CD4-positive, alpha-beta T cell (primary cell): ENCODE measurements at regions of chr15 and their contacts with region 1.

Region 1: DNA sequence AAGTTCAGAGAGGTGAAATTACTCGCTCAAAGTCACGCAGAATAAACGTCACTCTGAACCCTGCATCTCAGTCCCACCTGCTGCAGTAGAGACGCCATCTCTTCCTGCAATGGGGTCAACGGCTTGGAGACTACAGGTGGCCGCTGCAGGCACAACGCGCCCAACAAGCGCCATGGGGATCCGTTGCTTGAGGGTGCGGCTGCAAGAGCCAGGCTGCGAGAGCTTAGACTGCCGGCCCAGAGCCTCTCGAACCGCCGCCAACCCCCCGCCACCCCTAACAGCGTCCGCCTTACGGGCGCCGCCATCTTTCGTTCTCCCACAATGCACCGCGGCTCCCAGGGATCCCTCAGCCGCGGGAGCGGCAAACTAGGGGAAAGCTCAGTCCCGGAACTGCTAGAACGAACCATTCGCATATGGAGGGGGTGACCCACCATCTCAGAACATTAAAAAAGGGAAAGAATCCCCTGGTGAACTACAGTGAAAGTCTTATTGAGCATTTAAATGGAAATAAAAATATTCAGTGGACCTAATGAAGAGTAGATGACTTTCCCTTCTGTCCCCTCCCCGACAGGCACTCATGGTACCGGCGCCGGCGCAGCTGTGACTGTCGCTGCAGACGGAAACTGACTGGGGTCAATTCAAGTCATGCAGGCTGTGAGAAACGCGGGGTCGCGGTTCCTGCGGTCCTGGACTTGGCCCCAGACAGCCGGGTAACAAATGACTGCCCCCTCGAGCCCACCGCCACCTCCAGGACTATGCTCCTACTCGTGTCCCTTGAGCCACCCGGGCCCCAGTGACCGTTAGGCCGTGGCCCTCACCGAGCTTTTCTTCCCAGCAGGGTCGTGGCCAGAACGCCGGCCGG is at the starts of genes MRPL46 and MRPS11:
- DNase-seq: peak; percentile 82 to 94 (median 87)
- ATAC-seq: peak; percentile 91
- H3K4me3 ChIP-seq: peak within 1 kb of the TSS; percentile 74
- H3K4me3 Mint-ChIP-seq: peak within 1 kb of the TSS; percentile 98
- H3K27ac ChIP-seq: peak within 1 kb of the TSS; percentile 80 to 96
- H3K27ac Mint-ChIP-seq: peak within 1 kb of the TSS; percentile 99
- H3K4me1 ChIP-seq: peaks cover 19% of the 10 kb centered on the region
- H3K4me1 Mint-ChIP-seq: peaks cover 43% of the 10 kb centered on the region
- H3K27me3 ChIP-seq: no peaks in the 10 kb centered on the region
- H3K27me3 Mint-ChIP-seq: no peaks in the 10 kb centered on the region
- CTCF ChIP-seq: no peak
- total RNA-seq, gene MRPL46: 8.6 to 10.2 TPM
- total RNA-seq, gene MRPS11: 8.0 to 8.4 TPM

Region 2: DNA sequence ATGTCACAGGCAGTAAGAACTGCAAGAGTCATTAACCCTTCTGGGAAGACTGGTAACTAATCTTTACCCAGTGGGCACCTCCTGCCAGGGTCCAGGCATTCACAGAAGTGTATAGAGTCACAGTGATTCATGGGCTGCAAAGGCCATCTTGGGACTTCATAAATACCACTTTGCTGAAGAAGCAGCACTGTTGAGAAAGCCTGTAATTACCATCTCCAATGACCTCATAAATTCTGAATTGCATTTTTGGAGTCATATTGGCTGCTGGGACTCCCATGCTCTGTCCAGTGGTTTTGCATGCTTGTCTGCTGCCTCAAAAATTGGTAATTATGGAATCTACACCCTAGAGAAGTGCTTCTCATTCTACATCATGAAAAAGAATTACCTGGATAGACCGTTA is 1048.0 kb before region 1 on chr15:
- CTCF ChIA-PET with region 1: no interaction called
- POLR2A ChIA-PET with region 1: no interaction called
- intact Hi-C with region 1: no loop called
- DNase-seq: no peak
- ATAC-seq: no peak
- H3K4me3 ChIP-seq: no peak overlapping the region
- H3K4me3 Mint-ChIP-seq: no peak overlapping the region
- H3K27ac ChIP-seq: no peak overlapping the region
- H3K27ac Mint-ChIP-seq: no peak overlapping the region
- H3K4me1 ChIP-seq: no peaks in the 10 kb centered on the region
- H3K4me1 Mint-ChIP-seq: no peaks in the 10 kb centered on the region
- H3K27me3 ChIP-seq: no peaks in the 10 kb centered on the region
- H3K27me3 Mint-ChIP-seq: no peaks in the 10 kb centered on the region
- CTCF ChIP-seq: no peak

Region 3: GRCh38 chr15:88529021-88529630 is 61.8 kb after region 1 on chr15:
- CTCF ChIA-PET with region 1: no interaction called
- POLR2A ChIA-PET with region 1: no interaction called
- intact Hi-C with region 1: no loop called
- DNase-seq: no peak
- ATAC-seq: no peak
- H3K4me3 ChIP-seq: no peak overlapping the region
- H3K4me3 Mint-ChIP-seq: no peak overlapping the region
- H3K27ac ChIP-seq: no peak overlapping the region
- H3K27ac Mint-ChIP-seq: no peak overlapping the region
- H3K4me1 ChIP-seq: no peaks in the 10 kb centered on the region
- H3K4me1 Mint-ChIP-seq: peaks cover 6% of the 10 kb centered on the region
- H3K27me3 ChIP-seq: no peaks in the 10 kb centered on the region
- H3K27me3 Mint-ChIP-seq: no peaks in the 10 kb centered on the region
- CTCF ChIP-seq: no peak

Region 4: DNA sequence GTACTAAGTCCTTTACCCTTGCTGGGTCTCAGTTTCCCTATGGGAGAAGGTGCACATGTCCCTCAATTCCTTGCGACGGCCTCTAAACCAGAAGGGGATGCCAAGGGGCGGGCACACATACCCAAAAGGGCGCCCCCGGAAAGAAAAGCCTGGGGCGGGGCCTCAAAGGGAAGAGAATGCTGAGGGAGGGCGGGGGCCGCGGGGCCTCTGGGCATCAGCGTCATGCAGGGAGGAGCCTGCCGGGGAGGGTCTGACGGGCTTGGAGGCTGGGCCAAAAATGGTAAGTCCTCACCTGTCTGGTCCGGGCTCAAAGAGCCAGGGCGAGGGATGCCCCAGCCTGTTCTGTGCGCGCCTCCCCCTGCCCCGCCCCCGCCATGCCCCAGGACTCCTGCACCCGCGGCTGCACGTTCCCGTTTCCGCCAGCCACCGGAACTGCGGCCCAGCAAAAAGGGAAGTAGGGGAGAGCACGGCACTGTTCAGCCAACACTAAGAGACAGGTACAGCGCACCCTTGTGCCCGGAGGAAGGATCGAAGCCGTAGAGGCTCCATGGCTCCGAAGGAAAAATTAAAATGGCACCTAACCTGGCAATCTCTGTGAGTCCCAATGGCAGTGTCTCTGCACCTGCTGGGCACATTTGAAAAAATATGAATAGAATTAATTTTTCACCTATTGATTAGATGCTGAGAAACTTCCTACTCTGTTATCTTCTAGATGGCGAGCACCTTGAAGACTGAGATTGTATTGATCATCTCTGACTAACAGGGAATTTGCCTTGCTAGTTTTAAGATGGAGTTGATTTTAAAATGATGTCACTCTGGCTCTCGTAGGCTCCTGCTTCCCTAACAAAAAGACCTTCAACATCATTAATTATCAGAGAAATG is 79.2 kb after region 1 on chr15 and contains the start of gene DET1:
- CTCF ChIA-PET with region 1: no interaction called
- POLR2A ChIA-PET with region 1: no interaction called
- intact Hi-C with region 1: loop called in 1 of 2 experiments (anchors 1 kb)
- DNase-seq: peak; percentile 90 to 98 (median 94)
- ATAC-seq: peak; percentile 91
- H3K4me3 ChIP-seq: peak within 1 kb of the TSS; percentile 66
- H3K4me3 Mint-ChIP-seq: peak within 1 kb of the TSS; percentile 91
- H3K27ac ChIP-seq: peak within 1 kb of the TSS; percentile 64 to 74
- H3K27ac Mint-ChIP-seq: peak within 1 kb of the TSS; percentile 95
- H3K4me1 ChIP-seq: peaks cover 10% of the 10 kb centered on the region
- H3K4me1 Mint-ChIP-seq: peaks cover 19% of the 10 kb centered on the region
- H3K27me3 ChIP-seq: no peaks in the 10 kb centered on the region
- H3K27me3 Mint-ChIP-seq: no peaks in the 10 kb centered on the region
- CTCF ChIP-seq: peak; percentile 74
- total RNA-seq, gene DET1: 2.2 to 2.8 TPM

Region 5: GRCh38 chr15:88664151-88664778 is 197.0 kb after region 1 on chr15:
- CTCF ChIA-PET with region 1: no interaction called
- POLR2A ChIA-PET with region 1: interaction called, 3 read pairs
- intact Hi-C with region 1: loop called in 1 of 2 experiments (anchors 5 kb)
- DNase-seq: peak in 11 of 14 experiments; percentile 39 to 82 (median 50)
- ATAC-seq: peak; percentile 93
- H3K4me3 ChIP-seq: no peak overlapping the region
- H3K4me3 Mint-ChIP-seq: no peak overlapping the region
- H3K27ac ChIP-seq: no peak overlapping the region
- H3K27ac Mint-ChIP-seq: peak overlapping the region; percentile 64
- H3K4me1 ChIP-seq: peaks cover 27% of the 10 kb centered on the region
- H3K4me1 Mint-ChIP-seq: peaks cover 53% of the 10 kb centered on the region
- H3K27me3 ChIP-seq: no peaks in the 10 kb centered on the region
- H3K27me3 Mint-ChIP-seq: peaks cover 8% of the 10 kb centered on the region
- CTCF ChIP-seq: peak; percentile 72

Region 6: DNA sequence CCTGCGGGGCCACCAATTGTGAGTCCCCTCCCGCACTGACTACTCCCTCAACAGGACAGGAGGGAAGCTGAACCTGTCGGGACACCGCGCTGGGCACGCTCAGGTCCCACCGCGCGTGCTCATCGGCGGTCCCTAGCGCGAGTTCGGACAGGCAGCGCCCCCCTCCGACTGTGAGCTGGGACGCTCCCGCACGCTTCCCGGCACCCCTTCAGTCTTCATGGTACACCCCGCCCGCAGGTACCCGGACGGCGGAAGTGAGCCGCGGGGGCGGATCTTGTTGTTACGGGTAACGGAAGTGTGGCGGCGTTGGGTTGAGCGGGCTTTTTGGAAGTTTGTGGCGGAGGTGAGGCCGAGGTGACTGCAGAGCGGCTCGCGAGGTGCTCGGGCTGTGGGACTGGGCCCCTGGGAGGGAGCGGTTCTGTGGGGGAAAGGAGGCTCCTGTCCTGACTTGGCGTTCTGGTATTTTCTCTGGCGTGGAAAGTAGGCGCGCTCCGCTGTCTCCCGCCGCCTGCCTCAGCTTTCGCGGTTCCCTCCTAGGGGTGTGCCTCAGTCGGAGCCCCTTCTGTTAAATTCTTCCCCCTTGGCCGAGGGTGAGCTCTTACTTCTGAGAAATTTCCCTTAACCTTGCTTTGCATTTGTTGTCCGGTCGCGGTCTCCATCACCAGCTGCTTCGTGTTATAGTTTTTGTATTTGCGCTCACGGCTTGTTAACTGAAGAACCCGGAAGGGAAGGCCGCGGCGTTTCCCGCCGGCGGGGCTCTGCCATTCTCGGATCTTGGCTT is 776.6 kb after region 1 on chr15 and contains the start of gene FANCI:
- CTCF ChIA-PET with region 1: no interaction called
- POLR2A ChIA-PET with region 1: no interaction called
- intact Hi-C with region 1: loop called in 1 of 2 experiments (anchors 5 kb)
- DNase-seq: peak; percentile 92 to 99 (median 96)
- ATAC-seq: peak; percentile 98
- H3K4me3 ChIP-seq: peak within 1 kb of the TSS; percentile 84
- H3K4me3 Mint-ChIP-seq: peak within 1 kb of the TSS; percentile 92
- H3K27ac ChIP-seq: no peak within 1 kb of the TSS
- H3K27ac Mint-ChIP-seq: peak within 1 kb of the TSS; percentile 83
- H3K4me1 ChIP-seq: peaks cover 26% of the 10 kb centered on the region
- H3K4me1 Mint-ChIP-seq: peaks cover 37% of the 10 kb centered on the region
- H3K27me3 ChIP-seq: no peaks in the 10 kb centered on the region
- H3K27me3 Mint-ChIP-seq: no peaks in the 10 kb centered on the region
- CTCF ChIP-seq: no peak
- total RNA-seq, gene FANCI: 6.1 to 7.1 TPM

Region 7: DNA sequence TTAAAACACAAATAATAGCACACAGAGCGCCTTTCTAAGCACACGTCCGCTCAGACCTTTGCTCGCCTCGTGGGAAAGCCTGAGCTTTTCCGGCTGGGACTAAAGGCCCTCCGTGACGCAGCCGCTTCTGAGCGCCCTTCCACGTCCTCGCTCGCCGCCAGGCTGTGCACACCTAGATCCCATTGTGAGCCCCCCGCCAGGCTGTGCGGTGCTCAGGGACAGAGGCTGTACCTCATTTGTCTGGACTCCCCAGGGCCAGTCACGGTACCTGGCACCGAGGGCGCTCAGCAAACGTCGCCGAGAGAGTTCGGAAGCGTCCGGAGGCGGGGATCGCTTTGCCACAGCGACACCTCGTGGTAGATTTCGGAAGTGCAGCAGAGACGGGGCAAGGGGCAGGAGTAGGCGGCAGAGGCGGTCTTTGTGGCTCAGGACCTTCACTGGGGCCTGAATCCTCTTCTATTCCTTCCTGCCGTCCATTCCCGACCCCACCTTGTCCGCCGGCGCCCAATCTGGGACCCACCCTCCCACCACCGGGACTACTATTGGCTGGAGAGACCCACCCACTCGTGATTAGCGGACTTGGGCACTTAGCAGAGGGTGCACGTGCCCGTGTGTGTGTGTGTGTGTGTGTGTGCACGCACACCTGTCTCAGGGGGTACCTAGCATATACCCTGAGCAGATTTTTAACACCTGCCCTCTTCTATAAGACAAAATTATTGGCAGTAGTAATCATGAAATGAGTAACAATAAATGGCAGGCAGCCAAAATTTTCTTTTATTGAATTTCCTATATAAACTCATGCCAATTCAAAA is 963.4 kb after region 1 on chr15:
- CTCF ChIA-PET with region 1: no interaction called
- POLR2A ChIA-PET with region 1: no interaction called
- intact Hi-C with region 1: no loop called
- DNase-seq: peak; percentile 71 to 95 (median 88)
- ATAC-seq: peak; percentile 94
- H3K4me3 ChIP-seq: peak overlapping the region; percentile 56
- H3K4me3 Mint-ChIP-seq: peak overlapping the region; percentile 68
- H3K27ac ChIP-seq: no peak overlapping the region
- H3K27ac Mint-ChIP-seq: no peak overlapping the region
- H3K4me1 ChIP-seq: peaks cover 9% of the 10 kb centered on the region
- H3K4me1 Mint-ChIP-seq: no peaks in the 10 kb centered on the region
- H3K27me3 ChIP-seq: peaks cover 2 to 11% of the 10 kb centered on the region in 2 experiments
- H3K27me3 Mint-ChIP-seq: peaks cover 31% of the 10 kb centered on the region
- CTCF ChIP-seq: peak; percentile 97